ENCODE measurements at regions of chr1 and their contacts with region 1.

Region 1: GRCh38 chr1:207321079-207321789 is at the start of gene CD55:
- DNase-seq: peak; percentile 95 to 100 (median 98)
- ATAC-seq: peak; percentile 89
- H3K4me3 ChIP-seq: peak within 1 kb of the TSS; percentile 98
- H3K4me3 Mint-ChIP-seq: peak within 1 kb of the TSS; percentile 94
- H3K27ac ChIP-seq: peak within 1 kb of the TSS; percentile 92 to 96
- H3K27ac Mint-ChIP-seq: peak within 1 kb of the TSS; percentile 97
- H3K4me1 ChIP-seq: peaks cover 24% of the 10 kb centered on the region
- H3K4me1 Mint-ChIP-seq: peaks cover 45% of the 10 kb centered on the region
- H3K27me3 ChIP-seq: no peaks in the 10 kb centered on the region
- H3K27me3 Mint-ChIP-seq: no peaks in the 10 kb centered on the region
- CTCF ChIP-seq: no peak
- total RNA-seq, gene CD55: 218 to 229 TPM

Region 2: DNA sequence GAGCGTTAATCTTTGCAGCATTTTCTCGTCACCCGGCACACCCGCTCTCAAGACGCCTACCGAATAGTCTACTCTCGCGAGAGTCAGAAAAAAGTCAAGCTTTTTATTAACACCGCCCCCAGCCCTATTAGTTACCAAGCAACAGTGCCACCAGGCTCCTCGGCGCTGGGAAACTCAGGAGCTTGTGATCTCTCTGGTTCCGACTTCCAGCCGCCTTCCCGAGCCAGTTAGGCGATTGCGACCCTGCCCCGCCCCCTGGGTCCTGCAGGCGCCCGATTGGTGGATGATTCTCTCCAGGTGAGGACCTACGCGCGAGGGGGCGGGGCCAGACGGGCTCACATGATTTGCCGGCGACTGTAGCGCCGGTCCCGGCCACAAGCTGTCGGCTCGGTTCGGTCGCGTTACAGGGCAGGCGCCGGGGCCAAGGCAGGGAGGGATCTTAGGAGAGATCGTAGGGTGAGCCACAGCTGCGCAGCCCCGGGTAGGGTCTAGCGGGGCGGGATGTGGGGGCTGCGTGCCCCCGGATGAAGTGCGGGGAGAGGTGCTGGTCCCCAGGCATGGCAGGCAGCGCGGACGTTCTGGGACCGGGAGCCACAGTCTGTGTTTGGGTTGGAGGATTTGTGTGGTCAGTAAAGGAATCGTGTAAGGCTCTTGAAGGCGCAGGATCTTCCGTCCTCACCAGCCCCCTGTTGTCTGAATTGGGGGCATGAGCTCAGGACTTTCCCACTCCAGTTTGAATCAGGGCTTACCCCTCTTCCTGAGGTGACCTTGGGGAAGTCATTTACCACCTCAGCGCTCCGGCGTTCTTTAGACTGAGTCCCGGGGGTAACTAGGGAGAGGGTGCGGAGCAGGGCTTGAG is 268.1 kb before region 1 on chr1 and contains the start of gene PFKFB2:
- CTCF ChIA-PET with region 1: interaction called, 8 read pairs
- POLR2A ChIA-PET with region 1: interaction called, 17 read pairs
- intact Hi-C with region 1: loop called (anchors 5 kb)
- DNase-seq: peak; percentile 85 to 97 (median 94)
- ATAC-seq: peak; percentile 87
- H3K4me3 ChIP-seq: peak within 1 kb of the TSS; percentile 66
- H3K4me3 Mint-ChIP-seq: peak within 1 kb of the TSS; percentile 98
- H3K27ac ChIP-seq: peak within 1 kb of the TSS; percentile 24 to 50
- H3K27ac Mint-ChIP-seq: peak within 1 kb of the TSS; percentile 93
- H3K4me1 ChIP-seq: peaks cover 29% of the 10 kb centered on the region
- H3K4me1 Mint-ChIP-seq: peaks cover 56% of the 10 kb centered on the region
- H3K27me3 ChIP-seq: no peaks in the 10 kb centered on the region
- H3K27me3 Mint-ChIP-seq: no peaks in the 10 kb centered on the region
- CTCF ChIP-seq: no peak
- total RNA-seq, gene PFKFB2: 3.2 to 4.0 TPM

Region 3: GRCh38 chr1:207203541-207203940 is 117.7 kb before region 1 on chr1:
- CTCF ChIA-PET with region 1: no interaction called
- POLR2A ChIA-PET with region 1: interaction called, 7 read pairs
- intact Hi-C with region 1: loop called in 1 of 2 experiments (anchors 5 kb)
- DNase-seq: no peak
- ATAC-seq: no peak
- H3K4me3 ChIP-seq: no peak overlapping the region
- H3K4me3 Mint-ChIP-seq: no peak overlapping the region
- H3K27ac ChIP-seq: no peak overlapping the region
- H3K27ac Mint-ChIP-seq: no peak overlapping the region
- H3K4me1 ChIP-seq: peaks cover 4% of the 10 kb centered on the region
- H3K4me1 Mint-ChIP-seq: peaks cover 5% of the 10 kb centered on the region
- H3K27me3 ChIP-seq: no peaks in the 10 kb centered on the region
- H3K27me3 Mint-ChIP-seq: peaks cover 2% of the 10 kb centered on the region
- CTCF ChIP-seq: no peak

Region 4: GRCh38 chr1:207288315-207288714 is 32.9 kb before region 1 on chr1:
- CTCF ChIA-PET with region 1: interaction called, 3 read pairs
- POLR2A ChIA-PET with region 1: interaction called, 65 read pairs
- intact Hi-C with region 1: loop called in 1 of 2 experiments (anchors 5 kb)
- DNase-seq: no peak
- ATAC-seq: no peak
- H3K4me3 ChIP-seq: no peak overlapping the region
- H3K4me3 Mint-ChIP-seq: no peak overlapping the region
- H3K27ac ChIP-seq: no peak overlapping the region
- H3K27ac Mint-ChIP-seq: no peak overlapping the region
- H3K4me1 ChIP-seq: peaks cover 6% of the 10 kb centered on the region
- H3K4me1 Mint-ChIP-seq: peaks cover 28% of the 10 kb centered on the region
- H3K27me3 ChIP-seq: no peaks in the 10 kb centered on the region
- H3K27me3 Mint-ChIP-seq: no peaks in the 10 kb centered on the region
- CTCF ChIP-seq: no peak

Region 5: GRCh38 chr1:207336559-207337467 is 15.6 kb after region 1 on chr1:
- CTCF ChIA-PET with region 1: interaction called, 16 read pairs
- POLR2A ChIA-PET with region 1: interaction called, 66 read pairs
- intact Hi-C with region 1: loop called in 1 of 2 experiments (anchors 2 kb)
- DNase-seq: peak in 3 of 14 experiments; percentile 66 to 77 (median 75)
- ATAC-seq: peak; percentile 37
- H3K4me3 ChIP-seq: no peak overlapping the region
- H3K4me3 Mint-ChIP-seq: peak overlapping the region; percentile 68
- H3K27ac ChIP-seq: peak overlapping the region; percentile 48 to 59
- H3K27ac Mint-ChIP-seq: peak overlapping the region; percentile 81
- H3K4me1 ChIP-seq: peaks cover 14% of the 10 kb centered on the region
- H3K4me1 Mint-ChIP-seq: peaks cover 74% of the 10 kb centered on the region
- H3K27me3 ChIP-seq: no peaks in the 10 kb centered on the region
- H3K27me3 Mint-ChIP-seq: no peaks in the 10 kb centered on the region
- CTCF ChIP-seq: no peak

Region 6: GRCh38 chr1:207751790-207752455 is 430.7 kb after region 1 on chr1 and contains the start of gene CD46:
- CTCF ChIA-PET with region 1: no interaction called
- POLR2A ChIA-PET with region 1: no interaction called
- intact Hi-C with region 1: loop called in 1 of 2 experiments (anchors 10 kb)
- DNase-seq: peak; percentile 85 to 97 (median 92)
- ATAC-seq: peak; percentile 95
- H3K4me3 ChIP-seq: peak within 1 kb of the TSS; percentile 97
- H3K4me3 Mint-ChIP-seq: peak within 1 kb of the TSS; percentile 95
- H3K27ac ChIP-seq: peak within 1 kb of the TSS; percentile 66 to 85
- H3K27ac Mint-ChIP-seq: peak within 1 kb of the TSS; percentile 89
- H3K4me1 ChIP-seq: peaks cover 35% of the 10 kb centered on the region
- H3K4me1 Mint-ChIP-seq: peaks cover 84% of the 10 kb centered on the region
- H3K27me3 ChIP-seq: no peaks in the 10 kb centered on the region
- H3K27me3 Mint-ChIP-seq: no peaks in the 10 kb centered on the region
- CTCF ChIP-seq: no peak
- total RNA-seq, gene CD46: 111 to 115 TPM